PC-9 (cell line): ENCODE measurements at regions of chr1 and their contacts with region 1.

Region 1: GRCh38 chr1:31497601-31498000 is 78.7 kb upstream of the TINAGL1 start:
- DNase-seq: no peak
- H3K4me3 ChIP-seq: no peak overlapping the region
- H3K27ac ChIP-seq: no peak overlapping the region
- H3K4me1 ChIP-seq: no peaks in the 10 kb centered on the region
- H3K27me3 ChIP-seq: no peaks in the 10 kb centered on the region
- CTCF ChIP-seq: no peak

Region 2: DNA sequence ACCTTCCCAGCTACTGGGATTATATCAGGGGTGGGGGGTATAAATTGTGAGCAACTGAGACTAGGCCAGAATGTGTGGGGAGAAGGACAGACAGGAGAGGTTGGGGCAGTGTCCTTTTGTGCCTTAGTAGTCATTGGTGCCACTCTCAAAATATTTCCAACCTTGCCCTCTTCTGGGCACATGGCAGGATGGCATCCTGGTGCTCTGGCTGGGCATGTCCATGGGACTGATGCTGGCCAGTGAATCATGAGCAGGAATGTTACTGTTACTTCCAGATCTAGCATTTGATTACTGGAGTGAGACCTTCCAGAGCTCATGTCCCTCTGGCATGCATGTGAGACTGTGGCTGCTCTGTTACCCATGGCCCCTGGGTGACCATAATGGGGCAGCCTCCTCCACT is 925.4 kb before region 1 on chr1:
- CTCF ChIA-PET with region 1: no interaction called
- POLR2A ChIA-PET with region 1: interaction called, 12 read pairs
- intact Hi-C with region 1: no loop called
- DNase-seq: no peak
- H3K4me3 ChIP-seq: no peak overlapping the region
- H3K27ac ChIP-seq: no peak overlapping the region
- H3K4me1 ChIP-seq: no peaks in the 10 kb centered on the region
- H3K27me3 ChIP-seq: no peaks in the 10 kb centered on the region
- CTCF ChIP-seq: no peak

Region 3: DNA sequence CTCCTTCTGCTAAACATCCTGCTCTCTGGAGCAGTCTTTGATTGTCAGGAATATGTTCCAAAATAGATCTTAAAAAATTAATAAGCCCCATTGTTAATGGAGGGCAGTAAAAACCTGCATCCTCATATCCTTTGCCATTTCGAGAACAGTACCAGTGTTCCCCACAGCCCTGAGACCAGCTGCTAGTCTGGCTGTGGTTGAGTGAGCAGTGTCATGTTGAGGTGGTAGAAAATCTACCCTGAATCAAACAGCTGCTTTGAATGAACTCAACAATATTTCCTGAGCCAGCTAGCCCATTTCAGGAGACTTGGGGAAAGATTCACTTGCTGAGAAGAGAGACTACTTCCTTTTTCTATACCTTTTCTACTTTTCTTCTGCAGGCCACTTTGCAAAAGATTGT is 149.2 kb before region 1 on chr1:
- CTCF ChIA-PET with region 1: no interaction called
- POLR2A ChIA-PET with region 1: no interaction called
- intact Hi-C with region 1: no loop called
- DNase-seq: no peak
- H3K4me3 ChIP-seq: no peak overlapping the region
- H3K27ac ChIP-seq: no peak overlapping the region
- H3K4me1 ChIP-seq: no peaks in the 10 kb centered on the region
- H3K27me3 ChIP-seq: no peaks in the 10 kb centered on the region
- CTCF ChIP-seq: no peak